Caco-2 (cell line): ENCODE measurements at regions of chr11 and their contacts with region 1.

Region 1: GRCh38 chr11:86608251-86608799 is 64.1 kb downstream of the ME3 start:
- DNase-seq: peak; percentile 76
- H3K4me3 ChIP-seq: no peak overlapping the region
- H3K4me3 Mint-ChIP-seq: peak overlapping the region; percentile 45
- H3K27ac Mint-ChIP-seq: no peak overlapping the region
- H3K4me1 ChIP-seq: peaks cover 7% of the 10 kb centered on the region; the same call in 1 of the 2 replicates
- H3K4me1 Mint-ChIP-seq: peaks cover 23% of the 10 kb centered on the region
- H3K27me3 ChIP-seq: no peaks in the 10 kb centered on the region
- H3K27me3 Mint-ChIP-seq: no peaks in the 10 kb centered on the region
- CTCF ChIP-seq: peak; percentile 95 to 99

Region 2: GRCh38 chr11:86483940-86484794 is 124.2 kb before region 1 on chr11:
- CTCF ChIA-PET with region 1: interaction called, 16 read pairs
- POLR2A ChIA-PET with region 1: no interaction called
- intact Hi-C with region 1: no loop called
- DNase-seq: peak; percentile 90 to 93
- H3K4me3 ChIP-seq: no peak overlapping the region
- H3K4me3 Mint-ChIP-seq: peak overlapping the region; percentile 1
- H3K27ac Mint-ChIP-seq: peak overlapping the region; percentile 77
- H3K4me1 ChIP-seq: peaks cover 54% of the 10 kb centered on the region
- H3K4me1 Mint-ChIP-seq: peaks cover 57% of the 10 kb centered on the region
- H3K27me3 ChIP-seq: no peaks in the 10 kb centered on the region
- H3K27me3 Mint-ChIP-seq: no peaks in the 10 kb centered on the region
- CTCF ChIP-seq: no peak

Region 3: DNA sequence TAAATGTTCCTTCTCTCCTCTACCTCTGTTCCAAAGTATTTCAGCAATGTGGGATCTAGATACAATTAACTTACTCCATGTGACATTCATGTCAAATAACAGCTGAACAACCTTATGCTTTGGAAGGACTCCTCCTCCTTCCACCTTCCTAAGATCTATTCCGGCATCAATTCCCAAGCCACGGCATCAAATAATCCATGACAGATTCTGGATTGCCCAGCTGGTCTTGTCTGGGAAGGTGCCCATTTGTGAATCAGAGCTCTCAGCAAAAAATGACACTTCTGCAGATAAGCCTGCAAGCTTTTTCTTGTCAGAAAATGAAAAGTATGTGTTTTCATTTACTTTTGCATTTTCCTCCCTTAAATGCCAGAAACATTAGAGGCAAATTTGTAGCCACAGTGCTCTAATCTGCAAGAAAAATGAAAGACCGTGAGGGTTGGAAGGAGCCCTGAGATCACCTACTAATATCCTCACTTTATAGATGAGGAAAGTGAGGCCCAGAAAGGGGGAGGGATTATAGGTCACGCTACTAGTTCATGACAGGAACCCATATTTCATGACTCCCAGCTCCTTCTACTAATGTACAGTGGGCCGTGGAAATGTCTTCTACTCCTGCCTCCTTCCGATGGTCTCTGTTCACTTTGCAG is 59.9 kb before region 1 on chr11:
- CTCF ChIA-PET with region 1: no interaction called
- POLR2A ChIA-PET with region 1: no interaction called
- intact Hi-C with region 1: no loop called
- DNase-seq: no peak
- H3K4me3 ChIP-seq: no peak overlapping the region
- H3K4me3 Mint-ChIP-seq: no peak overlapping the region
- H3K27ac Mint-ChIP-seq: no peak overlapping the region
- H3K4me1 ChIP-seq: peaks cover 9% of the 10 kb centered on the region
- H3K4me1 Mint-ChIP-seq: peaks cover 18% of the 10 kb centered on the region
- H3K27me3 ChIP-seq: no peaks in the 10 kb centered on the region
- H3K27me3 Mint-ChIP-seq: no peaks in the 10 kb centered on the region
- CTCF ChIP-seq: no peak

Region 4: DNA sequence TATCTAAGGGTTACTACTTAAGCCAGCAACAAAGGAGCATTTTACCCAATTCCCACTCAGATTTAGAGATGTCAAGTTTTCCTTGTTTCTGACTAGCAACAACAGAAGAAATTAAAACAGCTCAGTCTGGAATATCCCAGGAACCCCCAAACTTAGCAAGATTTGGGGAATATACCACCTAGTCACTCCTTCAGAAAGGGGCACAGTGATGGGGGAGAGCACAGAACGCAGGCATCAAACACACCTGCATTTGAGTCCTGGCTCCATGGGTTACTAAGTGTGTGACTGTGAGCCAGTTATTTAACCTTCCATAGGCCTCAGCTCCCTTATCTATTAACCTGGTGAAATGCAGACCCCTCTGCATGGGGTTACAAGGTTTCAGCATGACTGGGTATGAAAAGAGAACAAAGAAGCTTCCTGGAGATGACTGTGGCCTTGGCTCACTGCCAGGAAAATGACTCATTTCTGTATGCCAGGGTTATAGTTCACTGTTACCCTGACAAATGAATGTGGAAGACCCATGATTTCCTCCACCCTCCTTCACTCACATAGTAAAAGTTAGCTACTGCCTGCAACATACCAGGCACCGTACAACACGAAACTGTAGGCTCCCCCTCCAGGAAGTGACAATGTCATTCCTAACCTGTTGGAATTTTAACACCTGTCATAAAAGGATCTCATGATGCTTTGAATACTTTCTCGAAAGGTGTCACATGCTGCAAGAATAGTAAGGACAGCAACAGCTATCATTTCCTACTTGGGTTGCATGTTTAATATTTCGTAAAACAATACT is 15.5 kb before region 1 on chr11:
- CTCF ChIA-PET with region 1: interaction called, 10 read pairs
- POLR2A ChIA-PET with region 1: interaction called, 4 read pairs
- intact Hi-C with region 1: no loop called
- DNase-seq: peak; percentile 69 to 91
- H3K4me3 ChIP-seq: no peak overlapping the region
- H3K4me3 Mint-ChIP-seq: no peak overlapping the region
- H3K27ac Mint-ChIP-seq: peak overlapping the region; percentile 65
- H3K4me1 ChIP-seq: peaks cover 35% of the 10 kb centered on the region
- H3K4me1 Mint-ChIP-seq: peaks cover 21% of the 10 kb centered on the region
- H3K27me3 ChIP-seq: no peaks in the 10 kb centered on the region
- H3K27me3 Mint-ChIP-seq: no peaks in the 10 kb centered on the region
- CTCF ChIP-seq: no peak

Region 5: GRCh38 chr11:86637988-86638387 is 29.7 kb after region 1 on chr11:
- CTCF ChIA-PET with region 1: no interaction called
- POLR2A ChIA-PET with region 1: no interaction called
- intact Hi-C with region 1: no loop called
- DNase-seq: no peak
- H3K4me3 ChIP-seq: no peak overlapping the region
- H3K4me3 Mint-ChIP-seq: no peak overlapping the region
- H3K27ac Mint-ChIP-seq: no peak overlapping the region
- H3K4me1 ChIP-seq: peaks cover 7% of the 10 kb centered on the region
- H3K4me1 Mint-ChIP-seq: no peaks in the 10 kb centered on the region
- H3K27me3 ChIP-seq: no peaks in the 10 kb centered on the region
- H3K27me3 Mint-ChIP-seq: no peaks in the 10 kb centered on the region
- CTCF ChIP-seq: no peak

Region 6: DNA sequence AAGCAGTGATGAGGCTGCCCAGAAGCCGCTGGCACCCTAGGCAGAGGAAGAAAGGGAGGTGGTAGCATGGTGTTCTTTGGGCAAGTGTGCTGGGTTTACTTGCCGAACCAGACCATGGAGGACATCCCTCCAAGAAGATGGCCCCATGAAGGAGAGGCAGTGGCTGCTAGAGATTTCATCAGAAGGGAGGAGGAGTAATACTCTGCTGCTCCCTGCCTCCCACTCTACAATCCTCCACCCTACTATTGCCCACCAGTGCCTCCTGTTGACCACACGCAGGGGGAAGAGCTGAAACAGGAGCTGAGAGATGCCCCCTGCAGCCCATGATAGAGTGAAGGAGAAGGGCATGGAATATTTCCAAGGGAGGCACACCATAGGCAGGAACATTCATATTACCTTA is 141.1 kb after region 1 on chr11:
- CTCF ChIA-PET with region 1: interaction called, 14 read pairs
- POLR2A ChIA-PET with region 1: no interaction called
- intact Hi-C with region 1: no loop called
- DNase-seq: no peak
- H3K4me3 ChIP-seq: no peak overlapping the region
- H3K4me3 Mint-ChIP-seq: no peak overlapping the region
- H3K27ac Mint-ChIP-seq: no peak overlapping the region
- H3K4me1 ChIP-seq: peaks cover 43% of the 10 kb centered on the region
- H3K4me1 Mint-ChIP-seq: peaks cover 49% of the 10 kb centered on the region
- H3K27me3 ChIP-seq: no peaks in the 10 kb centered on the region
- H3K27me3 Mint-ChIP-seq: no peaks in the 10 kb centered on the region
- CTCF ChIP-seq: peak; percentile 16 to 21

Region 7: GRCh38 chr11:86811637-86812321 is 203.5 kb after region 1 on chr11:
- CTCF ChIA-PET with region 1: interaction called, 40 read pairs
- POLR2A ChIA-PET with region 1: interaction called, 4 read pairs
- intact Hi-C with region 1: no loop called
- DNase-seq: peak; percentile 92 to 95
- H3K4me3 ChIP-seq: no peak overlapping the region
- H3K4me3 Mint-ChIP-seq: peak overlapping the region; percentile 49
- H3K27ac Mint-ChIP-seq: peak overlapping the region; percentile 92
- H3K4me1 ChIP-seq: peaks cover 98% of the 10 kb centered on the region
- H3K4me1 Mint-ChIP-seq: peaks cover 92% of the 10 kb centered on the region
- H3K27me3 ChIP-seq: no peaks in the 10 kb centered on the region
- H3K27me3 Mint-ChIP-seq: no peaks in the 10 kb centered on the region
- CTCF ChIP-seq: no peak